Sigmoid colon (tissue), 7 donors: ENCODE measurements at regions of chr18 and their contacts with region 1.

Region 1: GRCh38 chr18:48663931-48664847 is 125.4 kb downstream of the CTIF start:
- DNase-seq: peak; percentile 86
- H3K4me3 ChIP-seq: no peak overlapping the region
- H3K27ac ChIP-seq: peak overlapping the region in 2 of 4 donors; percentile 18 to 43
- H3K4me1 ChIP-seq: peaks cover 0 to 34% (median 18%) of the 10 kb centered on the region in 4 donors
- H3K27me3 ChIP-seq: no peaks in the 10 kb centered on the region
- CTCF ChIP-seq: peak; percentile 71 to 92 (median 88)
- EP300 ChIP-seq: no peak
- POLR2A ChIP-seq: no peak

Region 2: GRCh38 chr18:48355276-48356115 is 308.7 kb before region 1 on chr18:
- intact Hi-C with region 1: no loop called
- DNase-seq: peak; percentile 34
- H3K4me3 ChIP-seq: no peak overlapping the region
- H3K27ac ChIP-seq: no peak overlapping the region
- H3K4me1 ChIP-seq: no peaks in the 10 kb centered on the region
- H3K27me3 ChIP-seq: no peaks in the 10 kb centered on the region
- CTCF ChIP-seq: no peak
- EP300 ChIP-seq: no peak
- POLR2A ChIP-seq: no peak

Region 3: DNA sequence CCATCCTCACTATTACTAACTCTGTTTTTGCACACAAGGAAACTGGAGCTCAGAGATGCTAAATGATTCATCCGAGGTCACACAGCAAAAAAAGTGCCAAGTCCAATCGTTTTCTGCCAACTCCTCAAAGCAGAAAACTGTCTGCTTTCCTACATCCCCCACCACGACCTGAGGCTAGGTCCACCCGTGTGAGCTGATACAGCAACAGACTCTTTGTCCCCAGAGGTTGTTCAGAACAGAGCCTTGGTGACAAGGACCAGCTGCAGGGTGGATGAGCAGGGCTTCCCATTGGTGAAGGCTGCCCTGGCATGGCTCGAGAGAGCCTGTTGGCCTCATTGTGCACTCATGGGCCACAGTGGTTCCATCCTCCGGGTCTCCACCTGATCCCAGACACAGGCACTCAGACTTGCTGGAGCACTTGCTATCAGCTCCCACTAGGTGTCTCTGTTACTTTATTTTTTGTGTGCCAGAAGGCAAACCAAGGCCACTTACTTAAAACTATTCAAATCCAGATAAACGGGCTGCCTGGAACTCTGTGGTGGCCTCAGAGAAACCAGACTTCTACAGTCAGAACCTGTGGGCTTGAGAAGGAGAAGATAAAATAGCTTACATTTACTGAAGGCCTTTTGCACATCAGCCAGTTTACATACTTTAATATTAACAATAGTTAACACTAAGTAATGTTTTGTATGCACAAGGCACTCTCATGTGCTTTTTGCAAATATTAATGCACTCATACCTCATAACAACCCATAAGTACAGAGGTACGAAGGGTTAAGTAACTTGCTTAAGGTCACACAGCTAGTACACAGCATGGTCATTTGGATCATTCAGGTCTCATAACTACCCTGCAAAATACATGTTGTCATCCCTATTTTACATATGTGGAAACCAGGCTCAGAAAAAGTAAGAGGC is 188.3 kb before region 1 on chr18:
- intact Hi-C with region 1: loop called (anchors 1 kb)
- DNase-seq: no peak
- H3K4me3 ChIP-seq: no peak overlapping the region
- H3K27ac ChIP-seq: no peak overlapping the region
- H3K4me1 ChIP-seq: peaks cover 0 to 4% (median 0%) of the 10 kb centered on the region in 4 donors
- H3K27me3 ChIP-seq: no peaks in the 10 kb centered on the region
- CTCF ChIP-seq: peak; percentile 43 to 88 (median 78)
- EP300 ChIP-seq: no peak
- POLR2A ChIP-seq: no peak

Region 4: DNA sequence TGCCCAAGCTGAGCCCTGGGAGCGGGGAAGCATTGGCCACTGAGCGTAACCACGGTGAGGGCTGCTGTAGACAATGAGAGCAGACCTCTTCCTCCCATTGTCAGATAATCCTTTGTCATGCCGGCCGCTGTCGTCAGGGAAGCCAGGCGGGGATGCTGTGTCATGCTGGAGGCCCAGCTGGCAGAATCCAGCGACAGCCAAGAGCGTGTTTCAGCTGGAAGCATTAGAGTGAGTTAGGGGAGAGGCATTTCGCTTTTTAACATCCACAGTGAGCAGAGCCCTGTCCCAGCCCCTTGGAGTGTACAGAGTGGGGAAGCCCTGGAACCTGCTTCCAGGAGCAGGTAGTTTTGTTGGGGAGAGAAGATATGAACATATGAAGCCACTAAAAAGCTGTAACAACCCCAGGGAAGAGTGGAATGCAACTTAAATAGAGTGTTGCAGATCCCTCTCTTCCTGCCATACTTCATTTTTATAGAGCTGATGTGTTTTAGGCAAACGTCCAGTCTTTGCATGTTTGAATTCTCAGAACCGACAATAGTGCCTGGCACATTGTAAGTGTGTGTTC is 118.3 kb before region 1 on chr18:
- intact Hi-C with region 1: no loop called
- DNase-seq: peak; percentile 90
- H3K4me3 ChIP-seq: no peak overlapping the region
- H3K27ac ChIP-seq: peak overlapping the region; percentile 77 to 98 (median 89)
- H3K4me1 ChIP-seq: peaks cover 0 to 91% (median 79%) of the 10 kb centered on the region in 4 donors
- H3K27me3 ChIP-seq: no peaks in the 10 kb centered on the region
- CTCF ChIP-seq: no peak
- EP300 ChIP-seq: no peak
- POLR2A ChIP-seq: no peak